Ascending aorta (tissue), 2 donors: ENCODE measurements at regions of chr11 and their contacts with region 1.

Region 1: GRCh38 chr11:103773059-103773458 is 263.4 kb upstream of the DDI1 start:
- DNase-seq: no peak
- H3K4me3 ChIP-seq: no peak overlapping the region
- H3K27ac ChIP-seq: peak overlapping the region; percentile 72 to 79
- H3K4me1 ChIP-seq: peaks cover 0 to 24% of the 10 kb centered on the region in 2 donors
- H3K27me3 ChIP-seq: no peaks in the 10 kb centered on the region
- CTCF ChIP-seq: no peak

Region 2: DNA sequence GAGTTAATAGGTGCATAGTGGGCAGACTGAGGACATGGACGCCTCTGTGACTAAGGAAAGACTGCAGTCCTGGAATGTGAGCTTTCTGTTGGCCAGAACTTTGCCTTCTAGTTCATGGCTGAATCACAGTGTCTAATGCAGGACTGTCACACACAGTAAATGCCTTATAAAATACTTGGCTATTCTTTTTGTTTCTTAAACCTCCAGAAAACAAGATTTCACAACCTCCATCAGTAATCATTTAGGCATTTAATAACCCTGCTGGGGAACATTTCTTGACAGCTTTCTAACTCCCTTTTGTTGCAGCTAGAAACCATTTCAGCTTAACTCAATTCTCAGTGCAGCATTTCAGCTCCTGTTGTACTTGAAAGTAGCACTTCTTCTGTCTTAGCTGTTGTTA is 72.4 kb before region 1 on chr11:
- intact Hi-C with region 1: loop called (anchors 2 kb)
- DNase-seq: peak in 1 of 2 donors; percentile 64
- H3K4me3 ChIP-seq: no peak overlapping the region
- H3K27ac ChIP-seq: peak overlapping the region; percentile 10 to 13
- H3K4me1 ChIP-seq: peaks cover 3 to 12% of the 10 kb centered on the region in 2 donors
- H3K27me3 ChIP-seq: no peaks in the 10 kb centered on the region
- CTCF ChIP-seq: no peak

Region 3: GRCh38 chr11:103844327-103845215 is 71.5 kb after region 1 on chr11:
- intact Hi-C with region 1: loop called (anchors 5 kb)
- DNase-seq: no peak
- H3K4me3 ChIP-seq: no peak overlapping the region
- H3K27ac ChIP-seq: no peak overlapping the region
- H3K4me1 ChIP-seq: peaks cover 0 to 6% of the 10 kb centered on the region in 2 donors
- H3K27me3 ChIP-seq: no peaks in the 10 kb centered on the region
- CTCF ChIP-seq: no peak

Region 4: DNA sequence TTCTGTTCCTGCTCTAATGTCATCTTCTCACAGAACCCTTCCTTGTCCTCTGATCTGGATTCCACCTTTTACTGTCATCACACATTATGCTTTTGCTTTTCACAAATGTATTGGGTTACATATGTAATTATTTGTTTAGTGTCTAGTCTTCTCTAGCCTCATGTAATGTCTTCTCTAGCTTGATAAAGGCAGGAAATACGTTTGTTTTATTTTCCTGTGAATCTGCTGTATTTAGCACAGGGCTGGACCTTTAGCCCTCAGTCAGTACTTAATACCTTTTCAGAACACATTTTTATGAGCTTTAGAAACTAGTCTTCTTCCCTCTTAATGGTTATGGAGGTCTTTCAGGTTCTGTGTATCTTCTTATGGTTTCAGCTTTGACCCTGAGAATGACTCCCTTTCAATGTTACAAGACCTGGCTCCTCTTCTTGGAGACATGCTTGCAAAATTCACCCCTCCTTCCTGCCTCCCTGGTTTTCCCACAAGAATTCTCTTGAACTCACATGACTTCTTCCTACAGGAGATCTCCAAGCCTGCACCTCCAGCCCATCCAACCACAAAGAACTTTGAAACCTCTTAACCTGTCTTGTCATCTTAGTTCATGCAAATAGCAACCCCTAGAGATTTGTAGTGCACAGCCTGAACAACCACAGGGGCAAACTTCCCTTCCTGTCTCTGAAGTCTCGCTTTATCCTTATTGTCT is 130.7 kb after region 1 on chr11:
- intact Hi-C with region 1: no loop called
- DNase-seq: no peak
- H3K4me3 ChIP-seq: no peak overlapping the region
- H3K27ac ChIP-seq: no peak overlapping the region
- H3K4me1 ChIP-seq: no peaks in the 10 kb centered on the region
- H3K27me3 ChIP-seq: no peaks in the 10 kb centered on the region
- CTCF ChIP-seq: no peak